ENCODE measurements at regions of chr12 and their contacts with region 1.

Region 1: DNA sequence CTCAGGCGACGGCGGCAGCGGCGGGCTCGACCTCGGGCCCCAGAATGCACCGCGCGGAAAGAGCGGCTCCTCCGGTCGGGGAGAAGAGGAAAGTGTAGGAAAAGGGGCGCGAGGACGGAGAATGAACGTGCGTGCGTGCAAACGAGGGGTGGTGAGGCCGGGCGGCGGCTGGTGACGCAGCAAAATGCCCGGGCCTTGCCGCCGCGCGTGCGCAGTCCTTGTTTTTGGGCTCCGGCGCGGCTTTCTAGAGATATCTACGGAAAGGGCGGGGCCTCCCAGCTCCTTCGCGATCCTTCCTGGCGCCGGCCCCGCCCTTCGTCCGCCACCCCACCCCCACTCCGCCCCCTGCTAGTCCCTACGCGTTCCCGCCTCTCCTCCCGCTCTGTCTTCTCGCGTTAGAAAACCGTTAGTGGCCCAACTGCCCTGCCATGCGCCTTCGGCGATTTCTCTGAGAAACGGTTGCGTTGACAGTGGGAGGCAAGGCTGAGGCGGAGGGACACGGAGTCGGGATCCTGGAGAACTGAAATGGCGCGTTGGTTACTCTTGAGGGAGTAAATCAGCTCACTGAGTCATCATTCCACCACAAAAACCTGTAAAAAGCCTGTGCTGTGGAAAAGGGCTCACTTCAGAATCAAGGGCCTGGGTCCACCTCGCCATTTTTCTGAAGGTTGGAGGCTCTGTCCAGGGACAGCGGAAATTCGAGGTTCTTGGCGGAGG is at the start of gene PTGES3:
- DNase-seq: peak; percentile 99
- ATAC-seq: peak; percentile 80
- H3K4me3 Mint-ChIP-seq: peak within 1 kb of the TSS; percentile 96
- H3K27ac Mint-ChIP-seq: peak within 1 kb of the TSS; percentile 98
- H3K4me1 Mint-ChIP-seq: peaks cover 11% of the 10 kb centered on the region
- H3K27me3 Mint-ChIP-seq: no peaks in the 10 kb centered on the region
- CTCF ChIP-seq: no peak
- total RNA-seq, gene PTGES3: 381 to 406 TPM

Region 2: GRCh38 chr12:56636675-56637540 is 51.4 kb before region 1 on chr12:
- CTCF ChIA-PET with region 1: interaction called, 16 read pairs
- POLR2A ChIA-PET with region 1: interaction called, 62 read pairs
- intact Hi-C with region 1: loop called (anchors 5 kb)
- DNase-seq: peak; percentile 99
- ATAC-seq: peak; percentile 65
- H3K4me3 Mint-ChIP-seq: peak overlapping the region; percentile 91
- H3K27ac Mint-ChIP-seq: peak overlapping the region; percentile 98
- H3K4me1 Mint-ChIP-seq: peaks cover 58% of the 10 kb centered on the region
- H3K27me3 Mint-ChIP-seq: no peaks in the 10 kb centered on the region
- CTCF ChIP-seq: peak; percentile 66

Region 3: DNA sequence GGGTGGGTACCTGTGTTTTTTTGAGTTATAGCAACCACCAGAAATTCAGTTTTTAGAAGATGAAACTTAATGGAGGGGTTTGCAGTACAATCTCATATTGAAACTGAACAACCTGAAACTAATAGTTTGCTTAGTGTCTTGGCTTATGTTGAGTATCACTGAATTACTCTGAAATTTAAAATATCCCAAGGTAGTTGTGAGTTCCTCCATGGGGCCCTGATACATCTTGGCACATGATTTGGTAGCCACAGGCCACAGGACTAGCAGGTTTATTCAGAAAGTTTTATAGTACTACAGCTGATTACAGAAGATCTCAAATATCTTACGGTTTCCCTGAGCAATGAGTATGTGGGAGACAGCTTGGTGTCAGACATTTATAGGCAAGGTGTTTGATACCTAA is 10.6 kb before region 1 on chr12:
- CTCF ChIA-PET with region 1: interaction called, 4 read pairs
- POLR2A ChIA-PET with region 1: interaction called, 74 read pairs
- intact Hi-C with region 1: no loop called
- DNase-seq: peak; percentile 57
- ATAC-seq: peak; percentile 78
- H3K4me3 Mint-ChIP-seq: peak overlapping the region; percentile 32
- H3K27ac Mint-ChIP-seq: peak overlapping the region; percentile 75
- H3K4me1 Mint-ChIP-seq: peaks cover 69% of the 10 kb centered on the region
- H3K27me3 Mint-ChIP-seq: no peaks in the 10 kb centered on the region
- CTCF ChIP-seq: no peak

Region 4: DNA sequence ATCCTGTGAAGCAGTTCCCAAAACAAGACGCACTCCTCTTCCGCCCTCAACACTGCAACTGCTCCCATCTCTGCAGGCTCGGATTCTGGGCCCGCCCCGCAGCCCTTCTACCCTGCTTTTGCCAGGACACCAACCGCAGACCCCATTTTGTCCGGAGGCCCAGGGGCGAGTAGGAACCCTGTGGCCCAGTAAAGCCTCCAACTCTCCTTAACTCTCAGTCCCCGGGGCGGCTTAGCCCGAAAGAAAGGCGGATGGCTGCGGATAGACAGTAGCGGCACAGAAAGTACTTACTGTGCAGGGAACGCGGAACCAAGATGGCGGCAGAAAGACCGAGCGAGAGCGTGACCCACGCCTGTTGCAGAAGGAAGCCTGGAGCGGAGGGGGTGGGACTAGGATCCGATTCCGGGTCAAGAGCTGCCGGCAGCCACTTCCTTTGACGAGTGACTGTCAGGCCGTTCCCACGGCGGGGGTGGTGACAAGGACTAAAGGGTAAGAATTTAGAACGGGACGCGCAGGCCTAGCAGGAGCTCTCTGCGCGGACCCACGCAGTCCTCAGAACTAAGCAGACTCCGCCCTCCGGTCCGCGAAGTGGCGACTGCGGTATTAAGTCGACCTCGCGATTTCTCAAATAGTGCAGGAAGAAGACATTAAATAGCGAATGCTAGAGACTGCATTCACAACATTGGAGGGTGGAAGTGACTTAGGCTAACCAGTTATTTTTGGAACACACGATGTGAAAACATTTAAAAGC is 36.9 kb after region 1 on chr12 and contains the start of gene NACA:
- CTCF ChIA-PET with region 1: interaction called, 6 read pairs
- POLR2A ChIA-PET with region 1: interaction called, 45 read pairs
- intact Hi-C with region 1: loop called (anchors 5 kb)
- DNase-seq: peak; percentile 100
- ATAC-seq: peak; percentile 95
- H3K4me3 Mint-ChIP-seq: peak within 1 kb of the TSS; percentile 98
- H3K27ac Mint-ChIP-seq: peak within 1 kb of the TSS; percentile 99
- H3K4me1 Mint-ChIP-seq: peaks cover 42% of the 10 kb centered on the region
- H3K27me3 Mint-ChIP-seq: no peaks in the 10 kb centered on the region
- CTCF ChIP-seq: no peak
- total RNA-seq, gene NACA: 1,203 to 1,221 TPM

Measured in activated CD8-positive, alpha-beta T cell treated with anti-CD3 and anti-CD28 coated beads for 36 hours (primary cell).